Mammary epithelial cell (primary cell): ENCODE measurements at regions of chr12 and their contacts with region 1.

Region 1: GRCh38 chr12:106223485-106224354 is 24.1 kb downstream of the CKAP4 start:
- DNase-seq: peak; percentile 45
- H3K4me3 ChIP-seq: no peak overlapping the region
- H3K27ac ChIP-seq: no peak overlapping the region
- H3K4me1 ChIP-seq: peaks cover 14% of the 10 kb centered on the region
- H3K27me3 ChIP-seq: no peaks in the 10 kb centered on the region
- CTCF ChIP-seq: peak; percentile 94 to 95

Region 2: DNA sequence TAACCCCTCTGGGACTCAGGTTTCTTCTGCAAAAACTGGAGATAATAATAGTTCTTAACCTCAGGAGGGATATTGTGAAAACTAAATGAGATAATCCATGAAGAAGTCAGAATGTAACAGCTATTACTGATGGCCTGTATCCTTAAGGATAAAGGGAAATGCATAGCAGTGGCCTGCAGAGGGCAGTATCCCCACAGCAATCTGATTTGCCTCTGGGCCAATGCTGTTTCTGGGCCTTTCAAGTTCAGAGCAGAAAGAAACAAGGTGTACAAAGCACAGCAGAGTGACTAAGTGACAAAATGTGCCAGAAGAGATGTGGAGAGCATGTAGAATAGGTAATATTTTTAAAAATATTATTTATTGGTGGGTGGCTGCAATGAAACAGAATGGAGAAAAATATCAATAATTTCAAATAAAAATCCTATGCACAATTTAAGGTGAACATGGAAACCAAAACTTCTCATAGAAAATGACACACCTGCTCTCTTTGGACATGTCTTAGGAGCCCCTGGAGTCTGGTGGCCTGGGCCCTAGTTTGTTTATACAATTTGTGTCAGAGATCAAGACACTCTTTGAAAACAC is 803.0 kb before region 1 on chr12:
- CTCF ChIA-PET with region 1: interaction called, 4 read pairs
- dilution Hi-C with region 1: no loop called
- in situ Hi-C with region 1: loop called (anchors 10 kb)
- intact Hi-C with region 1: loop called (anchors 1 kb)
- DNase-seq: peak; percentile 63
- H3K4me3 ChIP-seq: no peak overlapping the region
- H3K27ac ChIP-seq: no peak overlapping the region
- H3K4me1 ChIP-seq: peaks cover 19% of the 10 kb centered on the region
- H3K27me3 ChIP-seq: no peaks in the 10 kb centered on the region
- CTCF ChIP-seq: peak; percentile 90 to 95

Region 3: GRCh38 chr12:105775343-105775742 is 448.4 kb before region 1 on chr12:
- CTCF ChIA-PET with region 1: no interaction called
- dilution Hi-C with region 1: no loop called
- in situ Hi-C with region 1: no loop called
- intact Hi-C with region 1: loop called (anchors 5 kb)
- DNase-seq: peak; percentile 43
- H3K4me3 ChIP-seq: no peak overlapping the region
- H3K27ac ChIP-seq: no peak overlapping the region
- H3K4me1 ChIP-seq: no peaks in the 10 kb centered on the region
- H3K27me3 ChIP-seq: no peaks in the 10 kb centered on the region
- CTCF ChIP-seq: peak in 1 of 2 donors; percentile 48

Region 4: GRCh38 chr12:106282457-106283097 is 58.9 kb after region 1 on chr12:
- CTCF ChIA-PET with region 1: no interaction called
- dilution Hi-C with region 1: no loop called
- in situ Hi-C with region 1: loop called in 1 of 2 experiments (anchors 5 kb)
- intact Hi-C with region 1: loop called (anchors 1 kb)
- DNase-seq: peak; percentile 63
- H3K4me3 ChIP-seq: no peak overlapping the region
- H3K27ac ChIP-seq: no peak overlapping the region
- H3K4me1 ChIP-seq: peaks cover 9% of the 10 kb centered on the region
- H3K27me3 ChIP-seq: no peaks in the 10 kb centered on the region
- CTCF ChIP-seq: peak; percentile 79 to 83

Region 5: DNA sequence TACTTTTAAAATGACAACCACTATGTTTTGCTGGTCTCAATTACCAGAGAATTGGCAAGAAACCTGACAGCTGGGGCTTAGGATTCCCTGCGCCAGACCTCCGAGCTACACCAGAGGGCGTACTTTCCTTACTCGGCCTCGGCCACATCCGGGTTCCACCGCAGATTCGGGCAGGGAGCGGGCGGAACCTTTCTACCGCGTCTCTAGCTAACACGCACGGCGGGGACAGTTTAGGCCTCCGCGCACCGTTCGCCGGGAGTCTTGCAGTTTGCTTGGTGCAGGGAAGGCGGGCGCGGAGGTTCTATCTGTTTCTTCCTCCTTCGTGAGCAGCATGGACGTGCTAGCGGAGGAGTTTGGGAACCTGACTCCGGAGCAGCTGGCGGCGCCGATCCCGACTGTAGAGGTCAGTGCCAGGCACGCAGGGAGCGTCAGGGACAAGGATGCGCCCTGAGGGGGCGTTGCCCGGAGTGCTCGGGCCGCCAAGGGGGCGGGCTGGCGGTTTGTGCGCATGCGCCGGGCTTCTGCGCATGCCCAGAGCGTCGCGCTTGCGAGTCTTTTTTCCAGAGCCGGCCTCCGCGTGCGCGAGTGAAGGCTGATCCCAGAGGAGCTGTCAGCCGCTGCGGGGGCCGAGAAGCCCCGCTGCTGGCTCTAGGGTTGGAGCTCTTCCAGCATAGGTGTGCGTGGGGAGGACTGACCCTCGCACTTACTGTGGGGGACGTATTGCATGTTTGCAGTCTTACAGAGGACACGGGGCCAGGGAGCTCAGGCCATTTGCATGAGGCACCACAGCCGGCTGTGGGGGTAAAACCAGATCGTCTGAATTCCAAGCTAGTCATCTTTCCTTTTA is 134.1 kb after region 1 on chr12 and contains the start of gene POLR3B:
- CTCF ChIA-PET with region 1: no interaction called
- dilution Hi-C with region 1: no loop called
- in situ Hi-C with region 1: no loop called
- intact Hi-C with region 1: loop called (anchors 1 kb)
- DNase-seq: peak; percentile 93
- H3K4me3 ChIP-seq: peak within 1 kb of the TSS; percentile 75 to 90 (median 81)
- H3K27ac ChIP-seq: peak within 1 kb of the TSS; percentile 69
- H3K4me1 ChIP-seq: peaks cover 10% of the 10 kb centered on the region
- H3K27me3 ChIP-seq: no peaks in the 10 kb centered on the region
- CTCF ChIP-seq: peak; percentile 81 to 92
- total RNA-seq, gene POLR3B: 13.3 TPM

Region 6: DNA sequence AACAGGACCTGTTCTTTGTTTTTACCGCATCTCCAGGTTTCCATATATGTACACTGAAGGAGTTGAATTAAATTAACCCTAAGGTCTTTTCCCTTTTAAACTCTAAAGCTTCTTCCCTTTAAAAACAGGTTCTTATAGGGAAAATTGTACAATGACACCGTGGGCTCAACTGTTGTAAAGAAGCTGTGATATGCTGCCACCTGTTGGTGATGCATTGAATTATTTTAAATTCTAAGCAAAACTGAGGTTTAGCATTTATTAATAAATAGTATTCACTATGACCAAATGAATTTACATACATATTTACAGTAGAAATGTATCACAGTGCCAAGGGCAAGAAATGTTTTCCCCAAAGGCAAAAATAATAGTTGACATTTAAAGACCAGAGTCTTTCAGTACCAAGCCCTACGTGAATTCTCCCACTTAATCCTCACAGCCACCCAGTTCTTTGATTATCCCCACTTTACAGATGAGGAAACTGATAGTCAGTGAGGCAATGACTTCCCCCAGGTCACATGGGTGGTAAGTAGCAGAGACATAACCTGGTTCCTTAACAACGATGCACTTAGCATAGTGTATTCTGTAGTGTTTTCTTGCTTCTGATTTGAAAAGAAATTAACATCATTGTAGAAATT is 696.3 kb after region 1 on chr12:
- CTCF ChIA-PET with region 1: no interaction called
- dilution Hi-C with region 1: no loop called
- in situ Hi-C with region 1: no loop called
- intact Hi-C with region 1: loop called (anchors 2 kb)
- DNase-seq: no peak
- H3K4me3 ChIP-seq: no peak overlapping the region
- H3K27ac ChIP-seq: no peak overlapping the region
- H3K4me1 ChIP-seq: no peaks in the 10 kb centered on the region
- H3K27me3 ChIP-seq: no peaks in the 10 kb centered on the region
- CTCF ChIP-seq: peak; percentile 64 to 69